ENCODE measurements at regions of chr12 and their contacts with region 1.

Region 1: DNA sequence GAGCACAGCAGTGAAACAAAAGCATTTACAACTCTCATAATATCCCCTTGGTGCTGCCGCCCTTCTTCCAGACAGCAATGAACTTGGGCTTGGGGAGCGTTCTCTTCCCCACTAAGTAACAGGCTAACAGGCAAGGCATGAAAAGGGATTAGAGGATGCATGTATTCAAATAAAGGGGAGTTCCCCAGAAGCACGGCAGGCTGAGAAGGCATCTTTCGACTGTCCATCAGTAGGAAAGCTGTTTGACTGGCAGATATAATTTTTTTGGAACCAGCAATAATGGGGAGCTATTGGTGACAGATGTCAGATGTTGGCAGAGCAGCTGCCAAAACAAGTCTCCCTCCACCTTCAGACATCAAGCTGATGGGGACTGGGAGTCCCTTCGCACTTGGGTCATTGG is 9.2 kb upstream of the TIGAR start:
- DNase-seq: no peak
- H3K4me3 ChIP-seq: no peak overlapping the region
- CTCF ChIP-seq: no peak

Region 2: GRCh38 chr12:4044736-4045730 is 266.7 kb before region 1 on chr12:
- in situ Hi-C with region 1: no loop called
- DNase-seq: no peak
- H3K4me3 ChIP-seq: no peak overlapping the region
- CTCF ChIP-seq: no peak

Region 3: GRCh38 chr12:4133636-4134447 is 177.9 kb before region 1 on chr12:
- in situ Hi-C with region 1: loop called (anchors 5 kb)
- DNase-seq: no peak
- H3K4me3 ChIP-seq: no peak overlapping the region
- CTCF ChIP-seq: no peak

Region 4: GRCh38 chr12:4383304-4383865 is 71.6 kb after region 1 on chr12:
- in situ Hi-C with region 1: no loop called
- DNase-seq: no peak
- H3K4me3 ChIP-seq: no peak overlapping the region
- CTCF ChIP-seq: no peak

Region 5: GRCh38 chr12:4486980-4487379 is 175.2 kb after region 1 on chr12:
- in situ Hi-C with region 1: no loop called
- DNase-seq: no peak
- H3K4me3 ChIP-seq: no peak overlapping the region
- CTCF ChIP-seq: no peak

Measured in astrocyte of the cerebellum (primary cell).